ENCODE measurements at regions of chr1 and their contacts with region 1.

Region 1: GRCh38 chr1:58783993-58784757 is at the start of gene JUN:
- DNase-seq: peak; percentile 93
- ATAC-seq: peak; percentile 77
- H3K4me3 Mint-ChIP-seq: peak within 1 kb of the TSS; percentile 93
- H3K27ac Mint-ChIP-seq: peak within 1 kb of the TSS; percentile 99
- H3K4me1 Mint-ChIP-seq: peaks cover 18% of the 10 kb centered on the region
- H3K27me3 Mint-ChIP-seq: no peaks in the 10 kb centered on the region
- total RNA-seq, gene JUN: 73.4 to 75.7 TPM

Region 2: GRCh38 chr1:58773406-58773840 is 10.8 kb before region 1 on chr1:
- POLR2A ChIA-PET with region 1: interaction called, 28 read pairs
- DNase-seq: peak; percentile 37
- ATAC-seq: peak; percentile 61
- H3K4me3 Mint-ChIP-seq: peak overlapping the region; percentile 22
- H3K27ac Mint-ChIP-seq: peak overlapping the region; percentile 68
- H3K4me1 Mint-ChIP-seq: peaks cover 5% of the 10 kb centered on the region
- H3K27me3 Mint-ChIP-seq: no peaks in the 10 kb centered on the region

Region 3: DNA sequence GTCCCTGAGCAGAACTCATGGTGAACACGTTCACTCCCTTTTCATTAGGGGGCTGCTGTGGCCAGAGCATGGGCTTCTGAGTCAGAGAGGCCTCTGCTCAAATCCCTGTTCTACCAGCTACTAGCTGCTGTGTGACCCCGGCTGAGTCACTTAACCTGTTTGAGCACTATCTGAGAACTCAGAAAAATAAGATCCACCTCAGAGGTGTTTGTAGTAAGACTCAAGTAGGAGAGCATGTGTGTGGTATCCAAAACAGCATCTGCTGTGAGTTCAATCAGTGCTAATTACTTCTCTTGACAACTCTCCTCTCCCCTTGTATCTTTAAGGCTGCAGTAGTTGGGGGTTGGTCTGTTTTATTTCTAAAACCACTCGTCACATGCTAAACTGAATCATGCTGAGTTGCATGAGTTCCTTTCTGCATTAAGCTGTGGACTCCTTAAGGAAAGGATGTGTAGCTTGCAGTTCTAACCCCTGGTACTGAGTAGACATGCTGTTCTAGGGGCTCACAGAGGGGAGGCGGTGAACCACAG is 39.4 kb after region 1 on chr1:
- POLR2A ChIA-PET with region 1: no interaction called
- DNase-seq: no peak
- ATAC-seq: no peak
- H3K4me3 Mint-ChIP-seq: no peak overlapping the region
- H3K27ac Mint-ChIP-seq: no peak overlapping the region
- H3K4me1 Mint-ChIP-seq: no peaks in the 10 kb centered on the region
- H3K27me3 Mint-ChIP-seq: peaks cover 10% of the 10 kb centered on the region

Region 4: DNA sequence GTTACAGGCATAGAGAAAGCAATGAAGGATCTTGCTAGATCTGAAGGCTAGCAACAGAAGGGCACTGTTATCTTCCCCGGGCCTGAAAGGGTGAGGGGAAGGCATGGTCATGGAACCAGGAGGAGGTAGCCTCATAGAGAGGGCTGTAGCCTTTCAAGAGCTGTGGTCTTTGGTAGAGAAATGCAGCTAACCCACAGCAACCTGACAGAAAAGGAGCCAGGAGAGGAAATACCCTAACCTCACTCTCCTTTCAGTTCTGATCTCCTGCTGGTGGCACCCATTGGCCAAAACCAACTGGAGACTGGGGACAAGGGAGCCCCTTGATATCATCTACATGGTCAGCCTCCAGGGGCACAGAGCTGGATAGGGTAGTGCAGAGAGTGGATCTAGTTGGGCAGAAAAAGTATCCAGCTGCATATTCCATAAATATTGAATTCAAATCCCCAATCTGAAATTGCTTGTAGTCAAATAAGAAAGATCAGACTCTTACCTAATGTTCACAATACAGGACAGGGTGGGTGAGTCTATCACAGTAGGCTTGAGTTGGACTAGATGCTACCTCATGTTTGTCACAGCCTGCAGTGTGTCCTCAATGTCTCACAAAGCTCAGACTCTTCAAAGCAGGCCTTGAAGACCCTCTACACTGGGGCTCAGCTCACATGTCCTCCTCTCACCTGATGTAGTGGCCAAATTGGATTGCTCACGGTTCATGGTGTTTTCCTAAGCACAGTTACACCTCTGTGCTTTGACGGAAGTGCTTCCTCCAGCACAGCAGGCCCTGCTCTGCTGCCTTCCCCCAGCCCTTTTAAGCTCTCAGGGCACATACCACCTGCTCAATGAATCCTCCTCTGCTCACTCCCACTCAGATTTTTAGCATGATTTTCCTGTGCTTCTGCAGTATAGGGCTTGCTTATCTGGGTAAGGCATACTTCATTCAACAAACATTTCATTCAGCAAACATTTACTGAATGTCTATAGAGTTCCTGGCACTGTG is 73.8 kb after region 1 on chr1:
- POLR2A ChIA-PET with region 1: interaction called, 23 read pairs
- DNase-seq: peak; percentile 53
- ATAC-seq: peak; percentile 90
- H3K4me3 Mint-ChIP-seq: peak overlapping the region; percentile 70
- H3K27ac Mint-ChIP-seq: peak overlapping the region; percentile 94
- H3K4me1 Mint-ChIP-seq: peaks cover 33% of the 10 kb centered on the region
- H3K27me3 Mint-ChIP-seq: peaks cover 3% of the 10 kb centered on the region

Region 5: GRCh38 chr1:58903514-58904298 is 119.5 kb after region 1 on chr1:
- POLR2A ChIA-PET with region 1: interaction called, 22 read pairs
- DNase-seq: peak; percentile 86
- ATAC-seq: peak; percentile 92
- H3K4me3 Mint-ChIP-seq: peak overlapping the region; percentile 85
- H3K27ac Mint-ChIP-seq: peak overlapping the region; percentile 92
- H3K4me1 Mint-ChIP-seq: peaks cover 26% of the 10 kb centered on the region
- H3K27me3 Mint-ChIP-seq: no peaks in the 10 kb centered on the region

Region 6: GRCh38 chr1:58968360-58968952 is 184.3 kb after region 1 on chr1:
- POLR2A ChIA-PET with region 1: interaction called, 11 read pairs
- DNase-seq: peak; percentile 55
- ATAC-seq: peak; percentile 80
- H3K4me3 Mint-ChIP-seq: peak overlapping the region; percentile 69
- H3K27ac Mint-ChIP-seq: peak overlapping the region; percentile 97
- H3K4me1 Mint-ChIP-seq: peaks cover 32% of the 10 kb centered on the region
- H3K27me3 Mint-ChIP-seq: peaks cover 3% of the 10 kb centered on the region

Region 7: DNA sequence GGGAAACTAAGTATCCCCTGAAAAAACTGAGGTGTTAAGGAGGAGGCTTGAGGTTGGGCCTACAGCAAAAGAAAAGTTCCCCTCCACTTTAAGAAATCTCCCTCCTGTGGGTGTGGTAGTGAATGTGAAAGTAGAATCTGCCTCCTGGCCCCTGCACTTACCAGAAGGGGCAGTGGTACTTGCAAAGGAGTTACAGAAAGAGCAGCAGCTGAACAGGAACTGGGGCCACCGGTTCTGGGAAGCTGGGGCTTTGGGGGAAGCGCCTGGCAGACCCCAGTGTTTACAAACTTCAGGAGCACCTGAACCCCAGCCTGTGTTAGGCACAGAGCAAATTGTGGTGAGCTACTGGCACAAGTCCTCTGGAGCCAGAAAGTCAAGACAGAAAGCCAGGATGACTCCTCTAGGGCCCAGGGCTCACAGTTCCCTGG is 262.6 kb after region 1 on chr1:
- POLR2A ChIA-PET with region 1: interaction called, 13 read pairs
- DNase-seq: peak; percentile 53
- ATAC-seq: peak; percentile 92
- H3K4me3 Mint-ChIP-seq: peak overlapping the region; percentile 54
- H3K27ac Mint-ChIP-seq: peak overlapping the region; percentile 93
- H3K4me1 Mint-ChIP-seq: peaks cover 36% of the 10 kb centered on the region
- H3K27me3 Mint-ChIP-seq: no peaks in the 10 kb centered on the region

Region 8: GRCh38 chr1:59699227-59699847 is 915.2 kb after region 1 on chr1:
- POLR2A ChIA-PET with region 1: interaction called, 45 read pairs
- DNase-seq: no peak
- ATAC-seq: peak; percentile 28
- H3K4me3 Mint-ChIP-seq: no peak overlapping the region
- H3K27ac Mint-ChIP-seq: no peak overlapping the region
- H3K4me1 Mint-ChIP-seq: peaks cover 26% of the 10 kb centered on the region
- H3K27me3 Mint-ChIP-seq: no peaks in the 10 kb centered on the region

Measured in activated naive CD8-positive, alpha-beta T cell treated with anti-CD3 and anti-CD28 coated beads, Interleukin-2, amount 10 ng/mL, durations not matched to agents 7 days and 5 days (primary cell).